ENCODE measurements at regions of chr5 and their contacts with region 1.

Region 1: GRCh38 chr5:94731471-94731870 is 113.0 kb downstream of the SLF1 start:
- DNase-seq: no peak
- CTCF ChIP-seq: no peak

Region 2: GRCh38 chr5:94538260-94538659 is 193.2 kb before region 1 on chr5:
- in situ Hi-C with region 1: loop called (anchors 10 kb)
- DNase-seq: no peak
- CTCF ChIP-seq: no peak